ENCODE measurements at regions of chr5 and their contacts with region 1.

Region 1: GRCh38 chr5:142145106-142145900 is 36.7 kb downstream of the NDFIP1 start:
- DNase-seq: peak; percentile 49 to 75
- H3K4me3 ChIP-seq: no peak overlapping the region
- H3K4me1 ChIP-seq: no peaks in the 10 kb centered on the region
- H3K27me3 ChIP-seq: no peaks in the 10 kb centered on the region

Region 2: DNA sequence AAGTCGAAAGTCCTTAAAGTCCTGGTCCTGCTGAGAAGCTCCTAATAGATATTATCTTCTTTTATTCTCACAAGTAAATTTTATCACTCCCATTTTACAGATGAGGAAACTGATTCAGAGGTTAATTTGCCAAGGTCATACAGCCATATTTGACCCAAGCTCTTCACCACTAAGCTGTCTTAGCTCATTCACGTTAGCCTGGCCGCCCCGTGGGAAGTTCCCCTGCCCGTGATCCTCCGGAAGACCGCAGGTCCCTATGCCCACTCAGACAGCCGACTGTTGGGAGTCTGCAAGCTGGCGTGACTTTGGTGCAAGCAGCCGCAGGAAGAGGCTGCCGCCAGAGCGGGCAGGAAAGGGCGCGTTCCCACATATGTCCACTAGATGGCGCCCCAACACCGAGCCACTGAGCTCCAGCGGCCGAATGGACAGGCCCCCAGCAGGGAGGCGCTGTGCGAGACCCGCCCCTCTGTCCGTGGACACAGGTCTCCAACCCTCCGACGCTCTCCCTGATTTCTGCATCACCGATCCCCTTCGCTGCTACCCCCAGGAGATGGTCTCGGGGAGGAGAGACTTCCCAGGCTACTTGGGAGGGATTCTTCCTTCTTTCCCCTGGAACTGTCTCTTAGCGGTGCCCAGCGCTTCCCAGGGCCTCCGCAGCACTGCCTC is 453.3 kb before region 1 on chr5:
- in situ Hi-C with region 1: loop called (anchors 25 kb)
- DNase-seq: peak; percentile 78 to 92
- H3K4me3 ChIP-seq: peak overlapping the region; percentile 28
- H3K4me1 ChIP-seq: peaks cover 3% of the 10 kb centered on the region; the same call in 1 of the 2 replicates
- H3K27me3 ChIP-seq: peaks cover 9% of the 10 kb centered on the region

Region 3: GRCh38 chr5:142006363-142007236 is 138.7 kb before region 1 on chr5:
- in situ Hi-C with region 1: loop called (anchors 5 kb)
- DNase-seq: no peak
- H3K4me3 ChIP-seq: no peak overlapping the region
- H3K4me1 ChIP-seq: no peaks in the 10 kb centered on the region
- H3K27me3 ChIP-seq: no peaks in the 10 kb centered on the region

Region 4: DNA sequence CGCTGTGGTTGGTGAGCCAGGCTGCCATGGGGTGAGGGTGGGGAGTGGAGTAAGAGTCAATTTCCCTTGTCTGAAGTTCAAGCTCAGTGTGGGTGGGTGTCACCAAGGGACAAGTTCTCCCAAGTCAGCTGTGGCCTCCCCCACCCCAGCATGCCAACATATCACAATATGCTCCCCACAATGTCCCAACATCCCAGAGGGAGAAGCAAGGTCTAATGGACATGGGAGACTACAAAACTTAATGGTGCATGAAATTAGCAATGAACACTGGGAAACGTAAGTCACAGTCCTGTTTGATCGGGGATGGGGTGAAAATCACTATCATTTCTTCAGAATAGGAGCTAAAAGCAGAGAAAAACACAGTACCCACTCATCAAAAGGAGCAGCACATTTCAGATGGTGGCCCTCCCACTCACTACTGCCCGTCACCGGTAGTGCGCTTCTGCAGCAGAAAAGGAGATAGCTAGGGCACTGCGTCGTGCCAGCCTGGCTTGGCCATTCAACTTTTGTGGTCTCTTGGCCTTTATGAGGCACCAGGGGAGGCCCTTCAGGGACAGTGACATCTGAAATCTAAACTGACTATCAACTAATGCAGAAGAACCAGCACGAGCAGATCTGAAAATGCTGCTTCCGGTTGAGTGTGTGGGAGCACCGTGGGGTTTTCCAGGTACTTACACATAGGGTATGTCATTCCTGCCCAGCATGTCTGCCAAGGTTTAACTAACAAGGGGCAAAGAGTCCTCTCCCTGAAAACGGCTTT is 57.2 kb before region 1 on chr5:
- in situ Hi-C with region 1: no loop called
- DNase-seq: no peak
- H3K4me3 ChIP-seq: no peak overlapping the region
- H3K4me1 ChIP-seq: no peaks in the 10 kb centered on the region
- H3K27me3 ChIP-seq: no peaks in the 10 kb centered on the region